Mammary epithelial cell (primary cell): ENCODE measurements at regions of chr1 and their contacts with region 1.

Region 1: GRCh38 chr1:177256153-177257075 is 85.7 kb downstream of the BRINP2 start:
- DNase-seq: peak; percentile 93
- H3K4me3 ChIP-seq: no peak overlapping the region
- H3K27ac ChIP-seq: peak overlapping the region; percentile 73
- H3K4me1 ChIP-seq: peaks cover 26% of the 10 kb centered on the region
- H3K27me3 ChIP-seq: no peaks in the 10 kb centered on the region
- CTCF ChIP-seq: peak; percentile 62 to 66

Region 2: GRCh38 chr1:177170756-177171535 is 85.5 kb before region 1 on chr1 and contains the start of gene BRINP2:
- CTCF ChIA-PET with region 1: no interaction called
- dilution Hi-C with region 1: no loop called
- in situ Hi-C with region 1: loop called in 1 of 2 experiments (anchors 25 kb)
- intact Hi-C with region 1: no loop called
- DNase-seq: peak; percentile 67
- H3K4me3 ChIP-seq: peak within 1 kb of the TSS; percentile 6 to 40 (median 39)
- H3K27ac ChIP-seq: no peak within 1 kb of the TSS
- H3K4me1 ChIP-seq: peaks cover 9% of the 10 kb centered on the region
- H3K27me3 ChIP-seq: peaks cover 20% of the 10 kb centered on the region
- CTCF ChIP-seq: no peak
- total RNA-seq, gene BRINP2: not detected

Region 3: GRCh38 chr1:177355595-177355994 is 99.2 kb after region 1 on chr1:
- CTCF ChIA-PET with region 1: interaction called, 3 read pairs
- dilution Hi-C with region 1: no loop called
- in situ Hi-C with region 1: no loop called
- intact Hi-C with region 1: loop called (anchors 1 kb)
- DNase-seq: peak; percentile 41
- H3K4me3 ChIP-seq: no peak overlapping the region
- H3K27ac ChIP-seq: no peak overlapping the region
- H3K4me1 ChIP-seq: no peaks in the 10 kb centered on the region
- H3K27me3 ChIP-seq: no peaks in the 10 kb centered on the region
- CTCF ChIP-seq: peak; percentile 51 to 59

Region 4: GRCh38 chr1:177511036-177511435 is 254.6 kb after region 1 on chr1:
- CTCF ChIA-PET with region 1: no interaction called
- dilution Hi-C with region 1: no loop called
- in situ Hi-C with region 1: no loop called
- intact Hi-C with region 1: no loop called
- DNase-seq: peak; percentile 6
- H3K4me3 ChIP-seq: no peak overlapping the region
- H3K27ac ChIP-seq: no peak overlapping the region
- H3K4me1 ChIP-seq: peaks cover 4% of the 10 kb centered on the region
- H3K27me3 ChIP-seq: no peaks in the 10 kb centered on the region
- CTCF ChIP-seq: no peak

Region 5: DNA sequence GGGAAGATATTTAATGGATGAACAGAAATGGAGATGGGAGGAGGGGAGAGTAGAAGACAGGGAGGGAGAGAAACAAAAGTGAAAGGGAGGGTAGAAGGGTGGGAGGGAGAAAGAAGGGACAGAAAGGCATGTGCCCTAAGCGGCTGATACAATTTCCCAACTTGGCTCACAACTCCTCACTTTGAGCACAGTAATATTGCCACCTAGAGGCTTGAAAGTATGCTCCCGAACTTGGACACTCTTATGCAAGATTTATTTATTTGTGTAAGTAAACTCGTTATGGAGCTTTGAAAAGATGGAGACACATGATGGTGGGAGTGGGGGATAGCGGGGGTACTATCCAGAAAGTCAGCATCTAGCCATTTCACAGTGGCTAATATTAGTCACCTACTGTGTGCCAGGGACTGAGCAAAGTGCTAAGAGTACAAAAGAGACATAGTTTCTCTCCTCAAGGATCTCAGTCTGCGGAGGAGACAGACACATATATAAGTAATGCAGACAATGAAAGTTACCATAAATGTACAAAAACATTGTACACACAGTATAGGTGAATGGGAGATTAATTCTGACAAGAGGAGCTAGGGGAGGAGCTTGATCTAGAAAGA is 523.8 kb after region 1 on chr1:
- CTCF ChIA-PET with region 1: no interaction called
- dilution Hi-C with region 1: no loop called
- in situ Hi-C with region 1: no loop called
- intact Hi-C with region 1: loop called (anchors 2 kb)
- DNase-seq: peak; percentile 51
- H3K4me3 ChIP-seq: no peak overlapping the region
- H3K27ac ChIP-seq: no peak overlapping the region
- H3K4me1 ChIP-seq: no peaks in the 10 kb centered on the region
- H3K27me3 ChIP-seq: no peaks in the 10 kb centered on the region
- CTCF ChIP-seq: peak; percentile 49 to 71